Activated B cell treated with CpG ODN at 0.5 μM for 24 hours (primary cell): ENCODE measurements at regions of chr21 and their contacts with region 1.

Region 1: GRCh38 chr21:42453509-42454229 is 42.4 kb downstream of the RSPH1 start:
- DNase-seq: no peak
- ATAC-seq: no peak
- H3K4me3 Mint-ChIP-seq: no peak overlapping the region
- H3K27ac Mint-ChIP-seq: no peak overlapping the region
- H3K4me1 Mint-ChIP-seq: peaks cover 11% of the 10 kb centered on the region
- H3K27me3 Mint-ChIP-seq: no peaks in the 10 kb centered on the region
- CTCF ChIP-seq: no peak

Region 2: GRCh38 chr21:41752231-41752681 is 701.4 kb before region 1 on chr21:
- CTCF ChIA-PET with region 1: no interaction called
- POLR2A ChIA-PET with region 1: no interaction called
- intact Hi-C with region 1: no loop called
- DNase-seq: no peak
- ATAC-seq: no peak
- H3K4me3 Mint-ChIP-seq: no peak overlapping the region
- H3K27ac Mint-ChIP-seq: no peak overlapping the region
- H3K4me1 Mint-ChIP-seq: no peaks in the 10 kb centered on the region
- H3K27me3 Mint-ChIP-seq: no peaks in the 10 kb centered on the region
- CTCF ChIP-seq: no peak

Region 3: DNA sequence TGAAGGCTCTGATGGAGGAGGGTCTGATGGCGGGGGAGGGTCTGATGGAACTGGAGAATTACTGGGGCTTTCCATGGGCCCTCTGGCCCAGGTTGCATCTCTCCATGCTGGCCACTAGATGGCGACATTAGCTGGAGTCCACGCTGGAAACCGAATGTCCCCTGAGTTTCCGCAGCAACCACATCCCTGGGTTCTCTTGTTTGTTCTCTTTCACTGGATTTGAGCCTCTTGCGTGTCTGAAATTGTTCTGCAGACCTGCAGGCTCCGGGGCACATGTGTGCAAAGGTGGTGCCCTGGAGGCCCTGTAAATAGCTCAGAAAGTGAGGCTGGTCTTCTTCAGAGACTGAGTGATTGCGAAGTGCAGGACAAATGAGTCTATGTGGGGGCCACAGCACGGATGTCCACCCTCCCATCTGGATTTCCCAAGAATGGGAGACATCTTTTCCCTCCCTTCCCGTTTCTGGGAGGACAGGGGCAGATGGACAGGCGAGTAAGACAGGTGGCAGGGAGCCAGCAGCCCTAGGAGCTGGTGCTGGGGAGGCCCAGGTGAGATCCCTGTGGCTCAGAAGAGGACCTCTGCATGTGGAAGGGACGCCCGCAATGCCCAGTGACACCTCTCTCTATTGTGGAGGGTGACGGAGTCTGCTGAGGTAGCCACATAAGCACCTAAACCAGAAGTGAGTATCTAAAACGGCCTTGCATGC is 307.9 kb before region 1 on chr21:
- CTCF ChIA-PET with region 1: interaction called, 4 read pairs
- POLR2A ChIA-PET with region 1: no interaction called
- intact Hi-C with region 1: loop called (anchors 1 kb)
- DNase-seq: peak; percentile 36
- ATAC-seq: peak; percentile 86
- H3K4me3 Mint-ChIP-seq: no peak overlapping the region
- H3K27ac Mint-ChIP-seq: no peak overlapping the region
- H3K4me1 Mint-ChIP-seq: peaks cover 7% of the 10 kb centered on the region
- H3K27me3 Mint-ChIP-seq: no peaks in the 10 kb centered on the region
- CTCF ChIP-seq: no peak

Region 4: DNA sequence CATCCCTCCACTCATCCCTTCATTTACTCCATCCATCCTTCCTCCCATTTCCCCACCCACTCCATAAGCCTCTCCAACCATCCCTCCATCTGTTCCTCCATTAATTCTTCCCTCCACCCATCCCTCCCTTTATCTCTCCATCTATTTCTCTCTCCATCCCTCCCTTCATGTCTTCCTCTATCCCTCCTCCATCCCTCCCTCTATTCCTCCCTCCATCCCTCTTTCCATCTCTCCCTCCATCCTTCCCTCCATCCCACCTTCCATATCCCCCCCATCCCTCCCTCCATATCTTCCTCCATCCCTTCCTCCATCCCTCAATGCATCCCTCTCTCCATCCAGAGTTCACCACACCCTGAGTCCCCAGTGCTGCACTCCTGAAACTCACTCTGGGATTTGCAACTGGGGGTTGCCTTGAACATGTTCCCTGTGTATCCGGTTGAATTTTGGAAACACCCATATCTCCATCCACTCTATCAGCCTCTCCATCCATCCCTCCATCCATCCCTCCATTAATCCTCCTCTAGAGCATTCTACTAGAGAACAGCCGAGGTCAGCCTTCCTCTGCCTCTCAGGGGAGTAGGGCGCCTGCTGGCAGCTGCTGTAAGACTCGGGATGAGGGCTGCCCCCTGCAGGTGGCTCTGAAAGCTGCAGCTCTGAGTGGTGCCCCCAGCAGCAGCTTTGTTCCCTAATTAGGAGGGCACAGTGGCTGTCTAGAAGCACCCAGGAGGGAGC is 195.3 kb before region 1 on chr21:
- CTCF ChIA-PET with region 1: interaction called, 3 read pairs
- POLR2A ChIA-PET with region 1: no interaction called
- intact Hi-C with region 1: loop called (anchors 1 kb)
- DNase-seq: peak; percentile 73
- ATAC-seq: peak; percentile 97
- H3K4me3 Mint-ChIP-seq: peak overlapping the region; percentile 1
- H3K27ac Mint-ChIP-seq: no peak overlapping the region
- H3K4me1 Mint-ChIP-seq: peaks cover 43% of the 10 kb centered on the region
- H3K27me3 Mint-ChIP-seq: no peaks in the 10 kb centered on the region
- CTCF ChIP-seq: peak; percentile 78

Region 5: DNA sequence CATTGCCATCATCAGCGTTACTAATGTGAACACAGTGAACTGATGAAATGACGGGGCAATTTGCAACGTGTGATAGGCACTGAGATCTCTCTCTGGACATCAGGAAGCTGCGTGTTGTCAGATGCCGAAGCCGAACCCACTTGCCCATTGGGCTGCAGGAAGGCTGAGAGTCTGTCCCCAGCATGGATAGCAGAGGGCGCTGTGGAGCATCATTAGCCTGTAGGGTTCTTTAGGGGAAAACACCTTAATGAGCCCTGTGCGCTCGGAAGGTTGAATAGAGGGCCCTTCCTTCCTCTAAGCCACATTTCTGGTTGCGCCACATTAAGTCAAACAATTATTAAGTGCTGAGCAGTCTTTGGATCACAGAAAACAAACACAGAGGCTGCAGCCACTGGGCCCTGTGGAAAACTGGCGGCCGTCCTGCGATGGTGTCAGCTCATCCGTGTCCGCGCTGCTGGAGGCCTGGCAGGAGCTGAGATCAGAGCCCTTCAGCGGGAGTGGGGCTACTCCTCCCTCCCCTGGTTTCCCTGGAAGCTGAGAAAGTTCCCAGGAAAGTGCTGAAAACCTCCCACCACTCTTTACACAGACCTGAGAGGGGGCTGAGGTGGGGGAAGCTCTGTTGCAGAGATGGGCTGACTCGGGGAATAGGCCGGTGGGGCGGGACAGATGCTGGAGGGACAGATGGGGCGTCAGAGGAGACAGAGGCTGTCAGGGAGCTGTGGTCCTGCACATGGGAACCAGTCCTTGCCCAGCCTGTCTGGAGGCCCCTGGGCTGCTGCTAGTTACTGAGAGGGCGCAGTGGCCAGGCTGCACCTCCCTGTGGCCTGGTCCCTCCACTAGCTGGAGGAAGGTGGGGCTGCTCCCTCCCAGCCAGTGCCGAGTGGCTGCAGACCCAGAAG is 115.6 kb before region 1 on chr21:
- CTCF ChIA-PET with region 1: interaction called, 13 read pairs
- POLR2A ChIA-PET with region 1: interaction called, 5 read pairs
- intact Hi-C with region 1: loop called (anchors 1 kb)
- DNase-seq: peak; percentile 61
- ATAC-seq: peak; percentile 100
- H3K4me3 Mint-ChIP-seq: no peak overlapping the region
- H3K27ac Mint-ChIP-seq: no peak overlapping the region
- H3K4me1 Mint-ChIP-seq: peaks cover 10% of the 10 kb centered on the region
- H3K27me3 Mint-ChIP-seq: peaks cover 13% of the 10 kb centered on the region
- CTCF ChIP-seq: no peak

Region 6: GRCh38 chr21:42467140-42467983 is 13.7 kb after region 1 on chr21:
- CTCF ChIA-PET with region 1: interaction called, 4 read pairs
- POLR2A ChIA-PET with region 1: no interaction called
- intact Hi-C with region 1: loop called (anchors 1 kb)
- DNase-seq: peak; percentile 13
- ATAC-seq: no peak
- H3K4me3 Mint-ChIP-seq: peak overlapping the region; percentile 6
- H3K27ac Mint-ChIP-seq: no peak overlapping the region
- H3K4me1 Mint-ChIP-seq: peaks cover 69% of the 10 kb centered on the region
- H3K27me3 Mint-ChIP-seq: peaks cover 3% of the 10 kb centered on the region
- CTCF ChIP-seq: no peak